Psoas muscle (tissue), 8 donors: ENCODE measurements at regions of chr2 and their contacts with region 1.

Region 1: DNA sequence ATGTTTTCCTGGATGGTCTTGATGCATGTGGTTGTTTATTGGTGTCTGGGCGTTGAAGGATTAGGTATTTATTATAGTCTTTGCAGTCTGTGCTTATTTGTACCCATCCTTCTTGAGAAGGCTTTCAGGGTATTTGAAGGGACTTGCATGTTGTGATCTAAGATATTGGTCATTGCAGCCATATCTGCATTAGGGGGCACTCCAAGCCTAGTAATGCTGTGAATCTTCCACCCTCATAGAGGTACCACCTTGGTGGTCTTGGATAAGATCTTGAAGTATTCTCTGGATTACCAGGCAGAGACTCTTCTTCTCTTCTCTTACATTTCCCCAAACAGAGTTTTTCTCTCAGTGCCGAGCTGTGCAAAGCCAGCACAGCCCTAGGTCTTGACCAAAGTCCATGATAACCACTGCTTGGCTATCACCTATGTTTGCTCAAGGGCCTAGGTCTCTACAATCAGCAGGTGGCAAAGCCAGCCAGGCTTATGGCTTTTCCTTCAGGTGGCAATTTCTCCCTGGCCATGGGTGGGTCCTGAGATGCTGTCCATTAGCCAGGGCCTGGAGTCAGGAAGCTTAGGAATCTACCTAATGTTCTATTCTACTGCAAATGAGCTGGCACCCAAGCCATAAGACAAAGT is 15.4 kb upstream of the PPP1R1C start:
- DNase-seq: no peak
- ATAC-seq: no peak
- H3K4me3 ChIP-seq: no peak overlapping the region
- H3K27ac ChIP-seq: no peak overlapping the region
- H3K4me1 ChIP-seq: no peaks in the 10 kb centered on the region
- H3K27me3 ChIP-seq: no peaks in the 10 kb centered on the region
- CTCF ChIP-seq: no peak

Region 2: GRCh38 chr2:182077451-182078142 is 107.3 kb after region 1 on chr2:
- intact Hi-C with region 1: loop called in 1 of 2 experiments (anchors 5 kb)
- DNase-seq: no peak
- ATAC-seq: peak; percentile 49 to 84 (median 65)
- H3K4me3 ChIP-seq: no peak overlapping the region
- H3K27ac ChIP-seq: no peak overlapping the region
- H3K4me1 ChIP-seq: no peaks in the 10 kb centered on the region
- H3K27me3 ChIP-seq: no peaks in the 10 kb centered on the region
- CTCF ChIP-seq: peak; percentile 66